OCI-LY7 (cell line): ENCODE measurements at regions of chr22 and their contacts with region 1.

Region 1: DNA sequence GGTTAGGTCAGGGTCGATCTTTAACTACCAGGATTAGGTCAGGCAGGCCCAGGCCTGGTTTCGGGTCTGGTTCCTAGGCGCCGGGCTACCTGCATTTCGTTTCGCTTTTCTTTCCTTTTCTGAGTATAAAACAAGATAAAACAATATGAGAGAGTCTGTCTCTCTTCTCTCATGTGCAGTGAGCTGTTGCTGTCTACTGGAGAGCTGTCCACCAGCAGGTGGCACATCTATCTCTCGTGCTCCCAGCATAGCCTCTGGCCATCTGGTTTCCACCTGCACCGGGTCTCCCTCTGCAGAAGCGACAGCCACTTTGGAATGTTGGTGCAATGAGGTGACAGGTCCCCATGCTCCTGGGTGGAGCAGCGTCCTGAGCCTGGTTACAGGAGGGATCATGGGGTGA is 27.6 kb downstream of the RIBC2 start:
- DNase-seq: peak; percentile 30
- H3K4me3 ChIP-seq: no peak overlapping the region
- H3K27ac ChIP-seq: no peak overlapping the region
- H3K4me1 ChIP-seq: no peaks in the 10 kb centered on the region
- CTCF ChIP-seq: peak; percentile 64

Region 2: GRCh38 chr22:45553351-45554039 is 112.4 kb after region 1 on chr22:
- CTCF ChIA-PET with region 1: no interaction called
- POLR2A ChIA-PET with region 1: no interaction called
- intact Hi-C with region 1: loop called (anchors 2 kb)
- DNase-seq: peak; percentile 62
- H3K4me3 ChIP-seq: no peak overlapping the region
- H3K27ac ChIP-seq: no peak overlapping the region
- H3K4me1 ChIP-seq: no peaks in the 10 kb centered on the region
- CTCF ChIP-seq: peak; percentile 92